ENCODE measurements at regions of chr16 and their contacts with region 1.

Region 1: GRCh38 chr16:66578651-66579531 is at the start of gene CMTM2:
- DNase-seq: no peak
- H3K4me3 ChIP-seq: peak within 1 kb of the TSS; percentile 7 to 56 (median 26)
- H3K27ac ChIP-seq: peak within 1 kb of the TSS in 1 of 2 donors; percentile 35
- H3K4me1 ChIP-seq: no peaks in the 10 kb centered on the region
- H3K27me3 ChIP-seq: no peaks in the 10 kb centered on the region
- CTCF ChIP-seq: no peak
- POLR2A ChIP-seq: no peak
- total RNA-seq, gene CMTM2: not detected

Region 2: DNA sequence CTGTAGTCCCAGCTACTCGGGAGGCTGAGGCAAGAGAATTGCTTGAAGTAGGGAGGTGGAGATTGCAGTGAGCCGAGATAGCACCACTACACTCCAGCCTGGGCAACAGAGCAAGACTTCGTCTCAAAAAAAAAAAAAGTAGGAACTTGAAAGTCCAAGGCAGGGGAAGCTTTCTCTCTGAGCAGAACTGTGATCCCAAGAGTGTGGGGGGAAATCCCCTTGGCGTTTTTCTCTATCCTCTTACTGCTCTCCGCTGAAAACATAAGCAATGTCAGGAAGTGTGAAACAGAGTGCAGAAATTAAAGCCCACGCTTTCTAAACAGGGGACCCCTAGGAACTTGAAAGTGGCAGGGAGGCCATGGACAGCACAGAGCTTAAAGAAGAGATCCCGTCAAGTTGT is 15.8 kb after region 1 on chr16:
- intact Hi-C with region 1: loop called (anchors 1 kb)
- DNase-seq: no peak
- H3K4me3 ChIP-seq: no peak overlapping the region
- H3K27ac ChIP-seq: no peak overlapping the region
- H3K4me1 ChIP-seq: no peaks in the 10 kb centered on the region
- H3K27me3 ChIP-seq: no peaks in the 10 kb centered on the region
- CTCF ChIP-seq: no peak
- POLR2A ChIP-seq: no peak

Region 3: GRCh38 chr16:67226804-67227557 is 648.1 kb after region 1 on chr16 and contains the start of gene TMEM208:
- intact Hi-C with region 1: no loop called
- DNase-seq: peak; percentile 95 to 96
- H3K4me3 ChIP-seq: peak within 1 kb of the TSS; percentile 63 to 95 (median 84)
- H3K27ac ChIP-seq: peak within 1 kb of the TSS; percentile 81 to 85
- H3K4me1 ChIP-seq: peaks cover 5 to 6% of the 10 kb centered on the region in 2 donors
- H3K27me3 ChIP-seq: no peaks in the 10 kb centered on the region
- CTCF ChIP-seq: no peak
- POLR2A ChIP-seq: peak; percentile 84
- total RNA-seq, gene TMEM208: 35.2 to 46.2 (median 44.2) TPM

Measured in breast epithelium (tissue), 4 donors.